Right lobe of liver (tissue), 6 donors: ENCODE measurements at regions of chr6 and their contacts with region 1.

Region 1: GRCh38 chr6:122381497-122382265 is 17.8 kb upstream of the HSF2 start:
- DNase-seq: peak in 2 of 3 donors; percentile 34 to 53
- ATAC-seq: peak; percentile 94 to 98 (median 96)
- H3K4me3 ChIP-seq: no peak overlapping the region
- H3K27ac ChIP-seq: no peak overlapping the region
- H3K4me1 ChIP-seq: no peaks in the 10 kb centered on the region
- H3K27me3 ChIP-seq: no peaks in the 10 kb centered on the region
- CTCF ChIP-seq: peak; percentile 68 to 81 (median 75)
- POLR2A ChIP-seq: no peak

Region 2: GRCh38 chr6:122520179-122520578 is 138.5 kb after region 1 on chr6:
- intact Hi-C with region 1: loop called in 1 of 2 experiments (anchors 10 kb)
- DNase-seq: no peak
- ATAC-seq: no peak
- H3K4me3 ChIP-seq: no peak overlapping the region
- H3K27ac ChIP-seq: no peak overlapping the region
- H3K4me1 ChIP-seq: no peaks in the 10 kb centered on the region
- H3K27me3 ChIP-seq: no peaks in the 10 kb centered on the region
- CTCF ChIP-seq: no peak
- POLR2A ChIP-seq: no peak

Region 3: GRCh38 chr6:122530440-122531046 is 148.9 kb after region 1 on chr6:
- intact Hi-C with region 1: loop called (anchors 10 kb)
- DNase-seq: peak in 1 of 3 donors; percentile 51
- ATAC-seq: peak; percentile 98 to 99 (median 98)
- H3K4me3 ChIP-seq: no peak overlapping the region
- H3K27ac ChIP-seq: no peak overlapping the region
- H3K4me1 ChIP-seq: no peaks in the 10 kb centered on the region
- H3K27me3 ChIP-seq: no peaks in the 10 kb centered on the region
- CTCF ChIP-seq: peak; percentile 87 to 94 (median 89)
- POLR2A ChIP-seq: no peak